Endothelial cell of umbilical vein (primary cell): ENCODE measurements at regions of chr2 and their contacts with region 1.

Region 1: GRCh38 chr2:226478109-226478809 is 321.4 kb downstream of the IRS1 start:
- DNase-seq: peak; percentile 72
- H3K4me3 ChIP-seq: no peak overlapping the region
- H3K27ac ChIP-seq: peak overlapping the region; percentile 71
- H3K4me1 ChIP-seq: peaks cover 13% of the 10 kb centered on the region
- H3K27me3 ChIP-seq: no peaks in the 10 kb centered on the region
- CTCF ChIP-seq: no peak
- POLR2A ChIP-seq: no peak

Region 2: DNA sequence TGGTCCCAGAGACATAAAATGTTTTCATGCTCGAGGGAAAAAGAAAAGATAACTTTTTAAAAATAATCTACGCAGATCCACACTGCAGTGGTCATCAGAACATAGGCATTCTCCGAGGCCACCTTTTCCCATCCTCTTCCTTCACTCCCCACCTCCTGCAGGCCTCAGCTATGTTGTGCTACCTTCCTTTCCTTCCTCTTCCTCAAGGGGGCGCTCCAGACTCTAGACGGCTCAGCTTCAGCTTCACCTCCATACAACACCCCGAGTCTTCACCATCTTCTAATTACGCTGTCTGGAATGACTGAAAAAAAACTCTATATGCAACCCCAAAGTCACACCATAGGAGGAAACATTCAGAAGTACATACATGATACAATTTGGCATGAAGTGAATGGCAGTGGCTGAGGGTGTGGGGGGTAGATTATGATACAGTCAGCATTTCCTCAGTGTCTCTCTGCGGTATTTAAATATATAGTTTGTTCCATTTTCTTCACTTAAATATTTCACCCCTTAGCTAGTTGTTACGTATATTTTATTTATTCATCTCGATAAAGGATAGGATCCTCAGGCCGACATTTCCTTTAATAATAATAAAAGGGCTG is 262.3 kb before region 1 on chr2:
- CTCF ChIA-PET with region 1: no interaction called
- POLR2A ChIA-PET with region 1: no interaction called
- dilution Hi-C with region 1: no loop called
- intact Hi-C with region 1: loop called (anchors 10 kb)
- DNase-seq: peak; percentile 10
- H3K4me3 ChIP-seq: no peak overlapping the region
- H3K27ac ChIP-seq: no peak overlapping the region
- H3K4me1 ChIP-seq: peaks cover 3% of the 10 kb centered on the region
- H3K27me3 ChIP-seq: no peaks in the 10 kb centered on the region
- CTCF ChIP-seq: peak; percentile 23 to 34
- POLR2A ChIP-seq: no peak

Region 3: DNA sequence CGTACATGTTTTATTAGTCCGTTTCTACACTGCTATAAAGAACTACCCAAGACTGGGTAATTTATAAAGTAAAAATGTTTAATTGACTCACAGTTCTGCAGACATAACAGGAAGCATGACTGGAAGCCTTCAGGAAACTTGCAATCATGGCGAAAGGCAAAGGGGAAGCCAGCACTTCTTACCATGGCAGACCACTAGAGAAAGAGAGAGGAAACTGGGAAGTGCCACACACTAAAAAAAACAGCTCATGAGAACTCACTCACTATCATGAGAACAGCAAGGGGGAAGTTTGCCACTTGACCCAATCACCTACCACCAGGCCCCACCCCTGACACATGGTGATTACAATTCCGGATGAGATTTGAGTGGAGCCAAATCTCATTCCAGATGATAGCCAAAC is 144.9 kb before region 1 on chr2:
- CTCF ChIA-PET with region 1: no interaction called
- POLR2A ChIA-PET with region 1: no interaction called
- dilution Hi-C with region 1: no loop called
- intact Hi-C with region 1: loop called (anchors 2 kb)
- DNase-seq: peak; percentile 12
- H3K4me3 ChIP-seq: no peak overlapping the region
- H3K27ac ChIP-seq: no peak overlapping the region
- H3K4me1 ChIP-seq: no peaks in the 10 kb centered on the region
- H3K27me3 ChIP-seq: no peaks in the 10 kb centered on the region
- CTCF ChIP-seq: no peak
- POLR2A ChIP-seq: no peak

Region 4: GRCh38 chr2:226378753-226379580 is 99.3 kb before region 1 on chr2:
- CTCF ChIA-PET with region 1: no interaction called
- POLR2A ChIA-PET with region 1: no interaction called
- dilution Hi-C with region 1: no loop called
- intact Hi-C with region 1: loop called (anchors 2 kb)
- DNase-seq: no peak
- H3K4me3 ChIP-seq: no peak overlapping the region
- H3K27ac ChIP-seq: no peak overlapping the region
- H3K4me1 ChIP-seq: peaks cover 8% of the 10 kb centered on the region
- H3K27me3 ChIP-seq: no peaks in the 10 kb centered on the region
- CTCF ChIP-seq: no peak
- POLR2A ChIP-seq: no peak

Region 5: GRCh38 chr2:226583715-226584114 is 105.5 kb after region 1 on chr2:
- CTCF ChIA-PET with region 1: no interaction called
- POLR2A ChIA-PET with region 1: no interaction called
- dilution Hi-C with region 1: no loop called
- intact Hi-C with region 1: loop called (anchors 5 kb)
- DNase-seq: peak; percentile 60
- H3K4me3 ChIP-seq: no peak overlapping the region
- H3K27ac ChIP-seq: no peak overlapping the region
- H3K4me1 ChIP-seq: peaks cover 5% of the 10 kb centered on the region
- H3K27me3 ChIP-seq: no peaks in the 10 kb centered on the region
- CTCF ChIP-seq: no peak
- POLR2A ChIP-seq: no peak

Region 6: DNA sequence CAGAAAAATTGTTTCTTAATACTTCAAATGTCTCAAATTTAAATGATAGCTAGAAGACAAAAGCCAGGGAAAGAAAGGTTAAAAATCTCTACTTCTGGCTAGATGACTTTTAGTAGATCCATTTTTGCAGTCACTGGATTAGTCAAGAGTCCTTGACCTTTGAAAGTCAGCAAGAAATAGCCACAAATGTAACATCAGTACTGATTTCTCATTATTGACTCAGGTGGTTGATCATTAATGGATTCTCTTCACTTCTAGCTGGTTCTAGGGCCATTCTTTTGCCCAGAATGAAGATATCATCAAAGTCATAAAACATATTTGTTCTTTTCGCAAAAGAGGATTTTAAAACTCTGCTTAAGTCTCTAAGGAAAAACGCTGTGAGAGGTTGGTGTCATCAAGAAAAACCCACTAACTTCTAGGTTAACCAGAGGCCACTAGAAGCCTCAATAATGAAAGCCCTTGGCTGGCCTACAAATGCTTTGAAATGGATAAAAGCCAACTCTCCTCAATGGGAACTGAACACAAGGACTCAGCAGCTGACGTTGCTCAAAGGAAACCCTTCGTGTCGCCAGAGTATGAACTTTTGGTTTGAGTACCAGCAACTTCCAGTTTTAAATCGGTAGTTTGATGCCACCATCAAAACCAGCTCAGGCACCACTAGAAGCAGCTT is 255.1 kb after region 1 on chr2:
- CTCF ChIA-PET with region 1: no interaction called
- POLR2A ChIA-PET with region 1: no interaction called
- dilution Hi-C with region 1: no loop called
- intact Hi-C with region 1: no loop called
- DNase-seq: no peak
- H3K4me3 ChIP-seq: no peak overlapping the region
- H3K27ac ChIP-seq: no peak overlapping the region
- H3K4me1 ChIP-seq: no peaks in the 10 kb centered on the region
- H3K27me3 ChIP-seq: no peaks in the 10 kb centered on the region
- CTCF ChIP-seq: no peak
- POLR2A ChIP-seq: no peak